Activated T-helper 2 cell treated with anti-CD3 and anti-CD28 coated beads, Interferon-gamma antibody, Interleukin-2, Interleukin-4, amounts not matched to agents 10 μg/mL and 5 μg/mL and 100 μg/mL, durations not matched to agents 14 hours and 24 hours and 36 hours (primary cell): ENCODE measurements at regions of chr2 and their contacts with region 1.

Region 1: GRCh38 chr2:109333414-109334210 is 204.6 kb downstream of the SH3RF3 start:
- DNase-seq: no peak
- H3K4me3 Mint-ChIP-seq: no peak overlapping the region
- H3K27ac Mint-ChIP-seq: no peak overlapping the region
- H3K4me1 Mint-ChIP-seq: peaks cover 29% of the 10 kb centered on the region
- H3K27me3 Mint-ChIP-seq: peaks cover 30% of the 10 kb centered on the region

Region 2: GRCh38 chr2:109143214-109144187 is 190.1 kb before region 1 on chr2:
- intact Hi-C with region 1: loop called (anchors 5 kb)
- DNase-seq: peak; percentile 64
- H3K4me3 Mint-ChIP-seq: no peak overlapping the region
- H3K27ac Mint-ChIP-seq: no peak overlapping the region
- H3K4me1 Mint-ChIP-seq: peaks cover 46% of the 10 kb centered on the region
- H3K27me3 Mint-ChIP-seq: peaks cover 54% of the 10 kb centered on the region

Region 3: DNA sequence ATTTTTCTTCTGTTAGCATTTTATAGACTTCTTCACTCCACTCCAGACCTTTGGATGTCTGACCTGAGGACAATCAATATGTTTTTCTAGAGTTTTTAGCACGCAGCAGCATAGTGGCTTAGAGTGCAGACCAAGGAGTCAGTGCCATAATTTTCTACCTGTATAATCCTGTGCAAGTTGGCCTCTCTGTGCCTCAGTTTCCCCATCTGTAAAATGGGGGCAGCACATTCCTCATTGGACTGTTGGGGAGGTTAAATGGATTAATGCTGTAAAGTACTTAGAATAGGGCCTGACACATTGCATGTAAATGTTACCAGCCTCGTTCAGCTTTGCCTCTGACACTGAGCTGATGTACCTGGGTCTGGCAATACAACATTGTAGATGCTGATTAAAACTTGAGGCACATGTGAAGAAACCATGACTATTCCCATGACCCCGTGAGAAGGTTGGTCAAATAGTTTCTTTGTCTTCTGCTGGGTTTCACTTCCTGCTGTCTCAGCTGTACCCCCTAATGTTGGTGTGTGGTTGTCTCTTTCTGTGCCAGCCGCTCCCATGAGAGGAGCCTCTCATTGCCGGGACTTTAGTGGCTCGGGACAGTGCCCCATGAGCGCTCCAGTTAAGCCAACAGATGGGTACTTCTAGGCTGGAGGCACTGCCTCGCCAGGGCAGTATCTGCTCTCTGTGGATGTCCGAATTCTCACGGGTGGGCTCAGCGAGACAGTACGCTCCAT is 79.3 kb before region 1 on chr2:
- intact Hi-C with region 1: no loop called
- DNase-seq: no peak
- H3K4me3 Mint-ChIP-seq: no peak overlapping the region
- H3K27ac Mint-ChIP-seq: no peak overlapping the region
- H3K4me1 Mint-ChIP-seq: peaks cover 3% of the 10 kb centered on the region
- H3K27me3 Mint-ChIP-seq: peaks cover 14% of the 10 kb centered on the region

Region 4: DNA sequence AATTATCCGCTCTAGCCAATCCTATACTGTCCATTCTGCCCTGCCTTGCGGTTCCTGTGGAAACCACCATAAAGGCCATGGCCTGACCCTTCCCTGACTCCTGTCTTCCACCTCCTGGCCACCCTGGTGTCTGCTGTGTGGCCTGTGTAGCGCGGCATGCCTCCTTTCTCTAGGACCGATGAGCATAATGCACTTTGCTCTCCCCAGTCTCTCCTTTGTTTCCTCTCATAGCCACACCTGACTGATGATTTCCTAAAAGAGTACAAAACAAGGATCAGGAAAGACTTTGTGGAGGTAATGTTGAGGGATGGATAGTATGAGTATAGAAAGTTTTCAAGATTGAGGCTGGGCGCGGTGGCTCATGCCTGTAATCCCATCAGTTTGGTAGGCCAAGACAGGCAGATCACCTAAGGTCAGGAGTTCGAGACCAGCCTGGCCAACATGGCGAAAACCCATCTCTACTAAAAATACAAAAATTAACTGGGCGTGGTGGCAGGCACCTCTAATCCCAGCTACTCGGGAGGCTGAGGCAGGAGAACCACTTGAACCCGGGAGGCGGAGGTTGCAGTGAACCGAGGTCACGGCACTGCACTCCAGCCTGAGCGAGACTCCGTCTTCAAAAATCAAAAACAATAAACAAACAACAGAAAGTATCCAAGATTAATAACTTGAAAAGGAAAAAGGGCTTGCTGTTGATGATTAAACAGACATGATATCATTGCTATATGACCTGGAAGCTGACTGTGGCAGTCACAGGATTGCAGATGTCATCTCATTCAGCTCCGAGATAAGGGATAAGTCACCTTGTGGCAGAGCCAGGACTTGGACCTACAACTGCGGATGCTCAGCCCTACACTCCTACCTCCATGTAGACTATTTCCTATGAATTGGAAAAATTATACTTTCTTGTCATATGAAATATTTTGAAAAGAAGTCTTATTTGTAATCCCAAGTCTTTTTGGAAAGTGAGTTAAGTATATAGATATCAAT is 297.1 kb after region 1 on chr2:
- intact Hi-C with region 1: no loop called
- DNase-seq: no peak
- H3K4me3 Mint-ChIP-seq: no peak overlapping the region
- H3K27ac Mint-ChIP-seq: no peak overlapping the region
- H3K4me1 Mint-ChIP-seq: no peaks in the 10 kb centered on the region
- H3K27me3 Mint-ChIP-seq: no peaks in the 10 kb centered on the region